HEK293 (cell line): ENCODE measurements at regions of chr16 and their contacts with region 1.

Region 1: GRCh38 chr16:50368410-50369132 is at the start of gene BRD7:
- H3K4me3 ChIP-seq: peak within 1 kb of the TSS; percentile 61
- H3K27ac ChIP-seq: peak within 1 kb of the TSS; percentile 83
- H3K4me1 ChIP-seq: no peaks in the 10 kb centered on the region
- CTCF ChIP-seq: no peak

Region 2: DNA sequence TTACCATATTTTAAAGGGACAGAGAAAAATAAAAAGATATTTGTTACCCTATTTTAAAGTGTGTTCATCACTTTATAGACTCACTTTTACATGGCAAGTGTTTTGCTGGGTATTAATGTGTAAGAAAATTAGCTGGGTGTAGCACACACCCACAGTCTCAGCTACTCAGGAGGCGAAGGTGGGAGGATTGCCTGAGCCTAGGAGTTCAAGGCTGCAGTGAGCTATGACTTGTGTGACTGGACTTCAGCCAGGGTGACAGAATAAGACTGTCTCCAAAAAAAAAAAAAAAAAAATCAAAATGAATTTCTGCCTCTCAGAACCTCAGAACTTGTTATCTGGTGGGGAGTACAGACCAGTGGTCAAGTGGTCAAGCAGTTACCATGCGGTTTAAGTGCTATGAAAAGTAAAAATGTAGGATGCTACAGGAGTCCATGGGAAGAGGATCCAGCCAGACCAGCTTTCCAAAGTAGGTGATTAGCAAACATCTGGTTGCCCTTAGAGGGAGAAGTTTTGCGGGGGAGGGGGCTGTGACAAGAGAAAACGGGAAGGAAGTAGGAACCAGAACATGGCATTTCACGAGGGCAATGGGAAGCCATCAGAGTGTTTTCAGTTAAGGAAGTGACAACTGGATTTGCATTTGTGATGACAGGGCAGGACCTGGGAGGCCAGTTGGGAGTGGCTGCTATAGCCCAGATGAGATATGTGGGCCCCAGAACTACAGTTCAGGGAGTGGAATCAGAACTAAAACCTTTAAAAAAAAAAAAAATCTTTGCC is 329.6 kb before region 1 on chr16:
- CTCF ChIA-PET with region 1: no interaction called
- POLR2A ChIA-PET with region 1: no interaction called
- H3K4me3 ChIP-seq: no peak overlapping the region
- H3K27ac ChIP-seq: no peak overlapping the region
- H3K4me1 ChIP-seq: no peaks in the 10 kb centered on the region
- CTCF ChIP-seq: no peak

Region 3: GRCh38 chr16:50354629-50355456 is 13.7 kb before region 1 on chr16:
- CTCF ChIA-PET with region 1: interaction called, 19 read pairs
- POLR2A ChIA-PET with region 1: no interaction called
- H3K4me3 ChIP-seq: no peak overlapping the region
- H3K27ac ChIP-seq: no peak overlapping the region
- H3K4me1 ChIP-seq: no peaks in the 10 kb centered on the region
- CTCF ChIP-seq: no peak

Region 4: GRCh38 chr16:50384500-50385135 is 16.0 kb after region 1 on chr16:
- CTCF ChIA-PET with region 1: interaction called, 10 read pairs
- POLR2A ChIA-PET with region 1: no interaction called
- H3K4me3 ChIP-seq: no peak overlapping the region
- H3K27ac ChIP-seq: no peak overlapping the region
- H3K4me1 ChIP-seq: no peaks in the 10 kb centered on the region
- CTCF ChIP-seq: no peak